ENCODE measurements at regions of chr7 and their contacts with region 1.

Region 1: GRCh38 chr7:105531792-105532671 is at the start of gene RINT1:
- DNase-seq: peak; percentile 95
- H3K4me3 Mint-ChIP-seq: peak within 1 kb of the TSS; percentile 83
- H3K27ac Mint-ChIP-seq: peak within 1 kb of the TSS; percentile 85
- H3K4me1 Mint-ChIP-seq: peaks cover 23% of the 10 kb centered on the region
- H3K27me3 Mint-ChIP-seq: no peaks in the 10 kb centered on the region
- total RNA-seq, gene RINT1: 22.1 to 25.2 TPM

Region 2: DNA sequence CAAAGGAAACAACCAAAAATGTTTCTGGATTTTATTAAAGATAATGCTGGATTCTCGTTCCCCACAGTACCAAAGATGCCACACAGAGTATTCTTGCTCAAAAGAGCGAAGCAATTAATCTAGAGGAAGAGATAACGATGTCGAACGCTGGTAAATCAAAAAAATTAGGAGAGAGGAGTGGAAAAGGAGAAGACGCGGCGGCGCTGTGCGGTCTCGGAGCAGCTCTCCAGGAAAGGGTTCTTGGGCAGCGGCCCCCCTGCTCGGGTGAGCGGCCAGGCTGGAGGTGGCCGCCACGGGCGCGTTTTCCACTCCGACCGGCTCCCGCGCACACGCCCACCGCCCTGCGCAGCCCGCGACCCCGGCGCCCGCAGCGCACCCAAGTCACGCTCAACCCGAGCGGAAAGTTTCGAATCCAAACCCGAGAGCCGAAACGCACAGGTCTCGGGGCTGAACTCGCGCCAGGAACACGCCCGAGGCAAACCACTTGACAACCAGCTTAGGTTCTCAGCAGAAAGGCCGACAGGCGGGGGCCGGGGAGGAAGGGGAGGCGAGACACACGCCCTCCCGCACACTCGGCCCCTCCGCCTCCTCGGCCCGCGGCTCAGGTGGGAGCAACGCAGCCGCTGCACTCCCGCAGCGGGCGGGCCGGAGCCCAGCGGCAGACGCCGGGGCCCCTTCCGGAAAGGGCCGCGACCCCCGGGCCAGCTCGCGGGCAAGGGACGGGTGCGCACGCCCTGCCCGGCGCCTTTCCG is 144.2 kb before region 1 on chr7:
- CTCF ChIA-PET with region 1: no interaction called
- intact Hi-C with region 1: loop called (anchors 5 kb)
- DNase-seq: peak; percentile 58
- H3K4me3 Mint-ChIP-seq: peak overlapping the region; percentile 85
- H3K27ac Mint-ChIP-seq: peak overlapping the region; percentile 65
- H3K4me1 Mint-ChIP-seq: peaks cover 32% of the 10 kb centered on the region
- H3K27me3 Mint-ChIP-seq: no peaks in the 10 kb centered on the region

Region 3: GRCh38 chr7:105589356-105590077 is 57.5 kb after region 1 on chr7:
- CTCF ChIA-PET with region 1: interaction called, 3 read pairs
- intact Hi-C with region 1: loop called (anchors 1 kb)
- DNase-seq: peak; percentile 82
- H3K4me3 Mint-ChIP-seq: no peak overlapping the region
- H3K27ac Mint-ChIP-seq: no peak overlapping the region
- H3K4me1 Mint-ChIP-seq: peaks cover 4% of the 10 kb centered on the region
- H3K27me3 Mint-ChIP-seq: no peaks in the 10 kb centered on the region

Region 4: GRCh38 chr7:105678811-105679495 is 146.9 kb after region 1 on chr7:
- CTCF ChIA-PET with region 1: interaction called, 3 read pairs
- intact Hi-C with region 1: loop called (anchors 5 kb)
- DNase-seq: peak; percentile 60
- H3K4me3 Mint-ChIP-seq: peak overlapping the region; percentile 82
- H3K27ac Mint-ChIP-seq: peak overlapping the region; percentile 86
- H3K4me1 Mint-ChIP-seq: peaks cover 59% of the 10 kb centered on the region
- H3K27me3 Mint-ChIP-seq: no peaks in the 10 kb centered on the region

Measured in activated naive CD4-positive, alpha-beta T cell treated with anti-CD3 and anti-CD28 coated beads for 36 hours (primary cell).